Keratinocyte (primary cell): ENCODE measurements at regions of chr12 and their contacts with region 1.

Region 1: GRCh38 chr12:40829738-40830144 is 137.5 kb downstream of the CNTN1 start:
- DNase-seq: peak; percentile 71
- H3K4me3 ChIP-seq: peak overlapping the region in 1 of 3 experiments; percentile 38
- H3K27ac ChIP-seq: peak overlapping the region; percentile 85
- H3K4me1 ChIP-seq: peaks cover 27% of the 10 kb centered on the region
- H3K27me3 ChIP-seq: no peaks in the 10 kb centered on the region
- CTCF ChIP-seq: no peak

Region 2: GRCh38 chr12:40325349-40325960 is 504.3 kb before region 1 on chr12:
- dilution Hi-C with region 1: loop called (anchors 25 kb)
- DNase-seq: no peak
- H3K4me3 ChIP-seq: peak overlapping the region in 1 of 3 experiments; percentile 7
- H3K27ac ChIP-seq: no peak overlapping the region
- H3K4me1 ChIP-seq: peaks cover 5% of the 10 kb centered on the region
- H3K27me3 ChIP-seq: no peaks in the 10 kb centered on the region
- CTCF ChIP-seq: peak; percentile 73 to 79 (median 75)

Region 3: DNA sequence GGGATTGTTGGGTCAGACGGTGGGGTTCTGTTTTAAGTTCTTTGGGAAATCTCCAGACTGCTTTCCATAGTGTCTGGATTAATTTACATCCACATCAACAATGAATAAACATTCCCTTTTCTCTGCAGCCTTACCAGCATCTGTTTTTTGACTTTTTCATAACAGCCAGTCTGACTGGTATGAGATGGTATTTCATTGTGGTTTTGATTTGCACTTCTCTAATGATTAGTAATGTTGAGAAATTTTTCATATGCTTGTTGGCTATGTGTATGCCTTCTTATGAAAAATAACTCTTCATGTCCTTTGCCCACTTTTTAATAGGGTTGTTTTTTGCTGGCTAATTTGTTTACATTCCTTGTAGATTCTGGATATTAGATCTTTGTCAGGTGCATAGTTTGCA is 278.3 kb before region 1 on chr12:
- dilution Hi-C with region 1: no loop called
- DNase-seq: no peak
- H3K4me3 ChIP-seq: no peak overlapping the region
- H3K27ac ChIP-seq: no peak overlapping the region
- H3K4me1 ChIP-seq: no peaks in the 10 kb centered on the region
- H3K27me3 ChIP-seq: no peaks in the 10 kb centered on the region
- CTCF ChIP-seq: no peak

Region 4: DNA sequence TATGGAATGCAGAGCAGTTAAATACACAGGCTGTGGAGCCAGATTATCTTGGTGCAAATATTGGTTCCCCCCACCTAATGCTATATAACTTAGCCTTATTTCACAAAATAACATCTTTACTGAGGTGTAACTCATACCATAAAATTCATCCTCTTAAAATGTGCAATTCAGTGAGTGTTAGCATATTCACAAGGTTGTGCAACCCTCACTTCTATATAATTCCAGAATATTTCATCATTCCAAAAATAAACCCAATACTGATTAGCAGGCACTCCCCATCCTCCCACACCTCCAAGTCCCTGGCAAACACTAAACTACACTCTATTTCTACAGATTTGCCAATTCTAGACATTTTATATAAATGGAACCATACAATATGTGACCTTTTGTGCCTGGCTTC is 253.8 kb before region 1 on chr12:
- dilution Hi-C with region 1: no loop called
- DNase-seq: no peak
- H3K4me3 ChIP-seq: no peak overlapping the region
- H3K27ac ChIP-seq: no peak overlapping the region
- H3K4me1 ChIP-seq: no peaks in the 10 kb centered on the region
- H3K27me3 ChIP-seq: no peaks in the 10 kb centered on the region
- CTCF ChIP-seq: no peak

Region 5: GRCh38 chr12:40864891-40865290 is 35.1 kb after region 1 on chr12:
- dilution Hi-C with region 1: no loop called
- DNase-seq: no peak
- H3K4me3 ChIP-seq: no peak overlapping the region
- H3K27ac ChIP-seq: no peak overlapping the region
- H3K4me1 ChIP-seq: no peaks in the 10 kb centered on the region
- H3K27me3 ChIP-seq: no peaks in the 10 kb centered on the region
- CTCF ChIP-seq: no peak